ENCODE measurements at regions of chr3 and their contacts with region 1.

Region 1: GRCh38 chr3:133805527-133806475 is at the start of gene SRPRB:
- DNase-seq: peak; percentile 98
- H3K4me3 Mint-ChIP-seq: peak within 1 kb of the TSS; percentile 98
- H3K27ac Mint-ChIP-seq: peak within 1 kb of the TSS; percentile 94
- H3K4me1 Mint-ChIP-seq: peaks cover 37% of the 10 kb centered on the region
- H3K27me3 Mint-ChIP-seq: peaks cover 5% of the 10 kb centered on the region
- total RNA-seq, gene SRPRB: 65.7 to 66.7 TPM

Region 2: GRCh38 chr3:133441867-133442270 is 363.9 kb before region 1 on chr3:
- CTCF ChIA-PET with region 1: no interaction called
- POLR2A ChIA-PET with region 1: no interaction called
- intact Hi-C with region 1: loop called (anchors 1 kb)
- DNase-seq: peak; percentile 43
- H3K4me3 Mint-ChIP-seq: peak overlapping the region; percentile 48
- H3K27ac Mint-ChIP-seq: peak overlapping the region; percentile 47
- H3K4me1 Mint-ChIP-seq: peaks cover 35% of the 10 kb centered on the region
- H3K27me3 Mint-ChIP-seq: no peaks in the 10 kb centered on the region

Region 3: DNA sequence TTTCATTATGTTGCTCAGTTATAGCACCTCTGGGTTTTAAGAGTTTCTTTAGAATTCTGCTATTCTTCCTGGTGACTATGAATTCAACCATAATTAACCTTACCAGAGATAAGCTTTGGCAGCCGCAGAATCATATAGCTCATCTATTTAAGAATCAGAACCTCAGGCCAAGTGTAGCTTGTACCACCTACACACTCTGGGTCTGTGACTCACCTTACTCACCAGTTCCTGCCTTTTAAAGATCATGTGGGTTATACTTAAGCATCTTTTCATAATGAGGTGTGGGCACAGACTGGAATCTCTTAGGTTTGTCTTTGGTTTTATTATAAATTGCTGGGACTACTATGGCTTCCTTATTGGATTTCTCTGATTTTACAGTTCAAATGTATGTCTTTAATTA is 210.5 kb before region 1 on chr3:
- CTCF ChIA-PET with region 1: no interaction called
- POLR2A ChIA-PET with region 1: no interaction called
- intact Hi-C with region 1: loop called (anchors 5 kb)
- DNase-seq: peak; percentile 41
- H3K4me3 Mint-ChIP-seq: no peak overlapping the region
- H3K27ac Mint-ChIP-seq: peak overlapping the region; percentile 23
- H3K4me1 Mint-ChIP-seq: peaks cover 28% of the 10 kb centered on the region
- H3K27me3 Mint-ChIP-seq: no peaks in the 10 kb centered on the region

Region 4: DNA sequence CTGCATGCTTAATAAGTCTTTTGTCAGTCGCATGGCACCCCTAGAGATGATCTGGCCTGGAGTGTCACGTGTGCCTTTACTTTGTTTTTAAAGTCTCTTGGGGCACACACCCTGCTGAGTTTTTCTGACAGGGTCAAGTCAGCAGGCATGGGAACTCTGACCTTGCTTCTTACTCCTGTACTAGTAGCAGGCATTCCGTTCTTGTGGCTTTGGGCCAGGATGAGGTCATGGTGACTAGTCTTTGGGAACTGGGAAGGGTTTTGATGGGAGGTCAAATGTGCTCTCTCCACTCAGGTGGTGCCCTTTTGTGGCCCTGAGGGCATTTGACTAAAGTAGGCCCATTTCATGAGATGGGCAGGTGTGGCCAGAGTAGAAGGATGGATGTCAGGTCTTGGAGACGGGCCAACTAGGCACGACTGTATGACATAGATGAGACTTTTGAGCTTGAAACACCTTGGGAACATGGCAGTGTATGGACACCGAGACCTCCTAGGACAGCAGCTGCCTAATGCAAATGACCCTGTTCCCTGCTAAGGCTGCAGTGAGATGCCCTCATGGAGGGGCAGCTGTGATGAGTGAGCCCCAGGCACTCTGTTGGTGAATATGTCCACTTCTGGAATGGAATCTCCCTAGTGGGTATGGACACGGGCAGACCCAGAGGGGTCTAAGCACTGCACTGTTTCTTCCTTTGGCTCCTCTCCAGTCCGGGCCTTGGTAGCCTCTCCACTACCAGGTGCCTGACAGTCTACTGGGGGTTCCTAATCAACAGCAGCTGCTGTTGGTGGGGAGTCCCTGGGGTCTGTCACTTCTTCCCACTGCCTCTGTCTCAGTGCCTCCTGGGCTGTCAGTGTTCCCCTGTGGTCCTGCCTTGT is 16.2 kb after region 1 on chr3:
- CTCF ChIA-PET with region 1: interaction called, 23 read pairs
- POLR2A ChIA-PET with region 1: interaction called, 3 read pairs
- intact Hi-C with region 1: no loop called
- DNase-seq: no peak
- H3K4me3 Mint-ChIP-seq: no peak overlapping the region
- H3K27ac Mint-ChIP-seq: no peak overlapping the region
- H3K4me1 Mint-ChIP-seq: peaks cover 4% of the 10 kb centered on the region
- H3K27me3 Mint-ChIP-seq: no peaks in the 10 kb centered on the region

Region 5: GRCh38 chr3:134239538-134239937 is 433.7 kb after region 1 on chr3:
- CTCF ChIA-PET with region 1: no interaction called
- POLR2A ChIA-PET with region 1: no interaction called
- intact Hi-C with region 1: loop called (anchors 10 kb)
- DNase-seq: no peak
- H3K4me3 Mint-ChIP-seq: peak overlapping the region; percentile 1
- H3K27ac Mint-ChIP-seq: peak overlapping the region; percentile 58
- H3K4me1 Mint-ChIP-seq: peaks cover 79% of the 10 kb centered on the region
- H3K27me3 Mint-ChIP-seq: no peaks in the 10 kb centered on the region